Calu3 (cell line): ENCODE measurements at regions of chr14 and their contacts with region 1.

Region 1: DNA sequence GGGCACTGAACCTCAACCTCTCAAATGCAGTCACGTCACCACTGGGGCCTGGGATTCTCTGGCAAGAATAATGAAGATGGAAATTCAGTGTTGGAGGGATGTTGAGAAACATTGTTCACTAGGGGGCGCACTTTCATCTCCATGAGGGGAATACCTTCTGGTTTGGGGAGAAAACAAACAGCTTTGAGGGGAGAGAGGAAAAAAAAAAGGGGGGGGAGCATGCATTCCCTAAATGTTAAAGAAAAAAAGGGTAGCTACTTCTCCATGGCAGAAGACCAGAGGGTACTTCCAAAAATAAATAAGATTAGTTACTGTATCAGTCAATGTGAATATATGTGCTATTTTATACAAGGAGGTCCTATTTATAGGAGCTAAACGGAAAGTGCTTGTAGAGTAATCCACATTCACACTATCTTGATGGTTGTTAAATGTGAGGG is 5.8 kb upstream of the TBPL2 start:
- DNase-seq: peak; percentile 74
- H3K4me3 Mint-ChIP-seq: no peak overlapping the region
- H3K27ac Mint-ChIP-seq: no peak overlapping the region
- H3K4me1 Mint-ChIP-seq: peaks cover 24% of the 10 kb centered on the region
- H3K27me3 Mint-ChIP-seq: no peaks in the 10 kb centered on the region
- CTCF ChIP-seq: peak; percentile 60

Region 2: GRCh38 chr14:55684956-55685584 is 238.8 kb after region 1 on chr14:
- CTCF ChIA-PET with region 1: no interaction called
- intact Hi-C with region 1: loop called (anchors 5 kb)
- DNase-seq: no peak
- H3K4me3 Mint-ChIP-seq: no peak overlapping the region
- H3K27ac Mint-ChIP-seq: no peak overlapping the region
- H3K4me1 Mint-ChIP-seq: peaks cover 2% of the 10 kb centered on the region
- H3K27me3 Mint-ChIP-seq: no peaks in the 10 kb centered on the region
- CTCF ChIP-seq: no peak